ENCODE measurements at regions of chr6 and their contacts with region 1.

Region 1: DNA sequence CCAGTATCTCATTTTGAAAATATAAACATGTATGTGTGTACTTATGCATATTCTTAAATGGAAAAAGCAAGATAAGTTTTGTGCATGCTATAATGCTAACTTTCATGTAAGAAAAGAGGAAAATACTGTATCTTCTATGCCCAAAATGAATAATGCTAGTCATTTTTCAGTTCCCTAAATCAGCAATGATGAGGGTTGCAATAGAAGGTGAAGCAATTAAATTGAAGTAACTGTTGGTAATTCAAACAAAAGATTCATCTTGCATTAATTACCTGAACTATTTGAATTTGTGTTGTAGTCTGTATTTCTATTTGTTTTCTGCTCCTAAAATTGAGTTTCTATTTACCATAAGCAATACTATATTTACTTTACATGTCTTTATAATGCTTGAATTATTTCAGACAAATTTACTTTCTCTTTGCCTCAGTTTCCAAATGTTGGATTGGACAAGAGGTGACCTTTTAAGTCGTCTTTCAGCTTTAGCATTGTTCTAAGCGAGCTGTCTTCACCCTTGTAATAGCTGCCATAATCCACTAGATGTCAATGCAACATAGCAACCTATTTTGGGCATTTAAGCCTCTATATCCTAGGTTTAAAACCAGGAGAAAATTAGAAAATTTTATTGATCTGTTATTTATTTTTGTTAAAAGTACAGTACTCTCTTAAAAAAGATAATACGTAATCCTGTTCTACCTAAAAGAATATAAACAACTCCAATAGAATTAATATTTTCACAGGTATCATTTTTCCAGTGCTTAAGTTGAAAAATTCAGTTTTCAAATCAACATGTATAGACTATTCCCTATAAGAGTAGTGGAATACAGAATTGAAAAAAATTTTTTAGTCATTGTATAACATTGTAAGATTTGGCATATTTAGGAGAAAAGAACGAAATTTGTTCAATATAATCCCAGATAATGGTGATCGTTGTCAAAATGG is 52.3 kb upstream of the IFNGR1 start:
- DNase-seq: no peak
- H3K4me3 Mint-ChIP-seq: no peak overlapping the region
- H3K27ac Mint-ChIP-seq: no peak overlapping the region
- H3K4me1 Mint-ChIP-seq: no peaks in the 10 kb centered on the region
- H3K27me3 Mint-ChIP-seq: no peaks in the 10 kb centered on the region
- CTCF ChIP-seq: peak; percentile 42

Region 2: GRCh38 chr6:137188855-137189254 is 82.7 kb before region 1 on chr6:
- CTCF ChIA-PET with region 1: no interaction called
- intact Hi-C with region 1: no loop called
- DNase-seq: no peak
- H3K4me3 Mint-ChIP-seq: no peak overlapping the region
- H3K27ac Mint-ChIP-seq: no peak overlapping the region
- H3K4me1 Mint-ChIP-seq: no peaks in the 10 kb centered on the region
- H3K27me3 Mint-ChIP-seq: no peaks in the 10 kb centered on the region
- CTCF ChIP-seq: no peak

Region 3: GRCh38 chr6:137313928-137314855 is 42.7 kb after region 1 on chr6:
- CTCF ChIA-PET with region 1: interaction called, 14 read pairs
- intact Hi-C with region 1: loop called (anchors 1 kb)
- DNase-seq: peak; percentile 37
- H3K4me3 Mint-ChIP-seq: no peak overlapping the region
- H3K27ac Mint-ChIP-seq: no peak overlapping the region
- H3K4me1 Mint-ChIP-seq: peaks cover 11% of the 10 kb centered on the region
- H3K27me3 Mint-ChIP-seq: no peaks in the 10 kb centered on the region
- CTCF ChIP-seq: peak; percentile 33

Region 4: GRCh38 chr6:137370871-137371633 is 99.5 kb after region 1 on chr6:
- CTCF ChIA-PET with region 1: no interaction called
- intact Hi-C with region 1: no loop called
- DNase-seq: no peak
- H3K4me3 Mint-ChIP-seq: no peak overlapping the region
- H3K27ac Mint-ChIP-seq: no peak overlapping the region
- H3K4me1 Mint-ChIP-seq: no peaks in the 10 kb centered on the region
- H3K27me3 Mint-ChIP-seq: no peaks in the 10 kb centered on the region
- CTCF ChIP-seq: no peak

Region 5: DNA sequence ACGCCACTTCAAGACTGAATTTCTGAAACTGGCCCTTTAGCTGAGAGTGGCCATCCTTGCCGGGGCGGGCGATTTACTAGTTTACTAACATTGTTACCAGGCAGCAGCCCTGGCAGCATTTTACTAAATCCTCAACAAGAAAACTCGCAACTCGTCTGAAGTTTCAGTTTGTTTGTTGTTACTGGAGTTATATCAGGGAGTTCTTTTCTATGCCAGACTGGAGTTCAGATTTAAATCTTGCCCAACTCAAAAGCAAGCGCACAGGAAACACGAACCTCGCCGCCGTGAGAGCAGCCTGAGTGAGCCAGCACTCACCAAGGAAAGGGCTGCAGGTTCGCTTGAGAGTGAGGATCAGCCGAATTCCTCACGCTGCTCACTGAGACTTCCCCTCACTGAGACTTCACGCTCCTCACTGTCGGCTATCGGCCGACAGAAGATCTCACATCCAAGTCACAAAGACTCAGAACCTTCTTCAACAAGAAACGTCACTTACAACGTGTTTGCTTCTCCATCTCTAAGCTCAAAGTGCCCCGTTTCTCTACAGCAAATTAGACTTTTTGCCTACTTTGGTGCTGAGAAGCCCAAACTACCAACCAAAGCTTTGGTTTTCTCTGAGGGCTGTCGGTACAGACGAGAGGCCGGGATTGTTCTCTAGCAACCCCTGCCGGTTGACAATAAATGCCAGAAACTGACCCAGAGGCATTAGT is 143.8 kb after region 1 on chr6:
- CTCF ChIA-PET with region 1: no interaction called
- intact Hi-C with region 1: loop called (anchors 10 kb)
- DNase-seq: peak; percentile 61
- H3K4me3 Mint-ChIP-seq: peak overlapping the region; percentile 71
- H3K27ac Mint-ChIP-seq: peak overlapping the region; percentile 59
- H3K4me1 Mint-ChIP-seq: no peaks in the 10 kb centered on the region
- H3K27me3 Mint-ChIP-seq: peaks cover 50% of the 10 kb centered on the region
- CTCF ChIP-seq: peak; percentile 50

Region 6: DNA sequence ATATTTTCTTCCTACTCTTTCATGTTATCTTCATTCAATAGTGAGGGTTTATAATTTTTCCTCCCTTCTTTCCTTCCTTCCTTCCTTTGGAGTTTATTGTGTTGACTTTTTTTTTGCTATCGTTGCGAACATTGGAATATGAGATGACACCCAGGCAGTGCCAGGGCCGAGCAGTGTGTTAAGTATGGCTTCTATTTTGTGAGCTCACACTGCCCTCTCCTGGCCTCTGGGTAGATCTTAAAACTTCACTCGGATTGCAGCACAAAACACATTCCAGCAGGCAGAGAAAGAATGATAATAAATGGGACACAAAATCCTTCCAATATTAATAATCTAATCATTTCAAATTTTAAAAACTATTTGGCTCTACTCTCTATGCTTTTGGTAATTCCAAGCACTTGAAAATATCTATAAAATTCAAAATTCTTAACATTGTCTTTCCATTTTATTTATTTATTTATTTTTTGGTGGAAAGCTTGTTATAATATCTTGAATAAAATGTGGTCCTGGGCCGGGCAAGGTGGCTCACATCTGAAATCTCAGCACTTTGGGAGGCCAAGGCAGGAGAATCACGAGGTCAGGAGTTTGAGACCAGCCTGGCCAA is 370.1 kb after region 1 on chr6:
- CTCF ChIA-PET with region 1: interaction called, 4 read pairs
- intact Hi-C with region 1: loop called (anchors 1 kb)
- DNase-seq: peak; percentile 53
- H3K4me3 Mint-ChIP-seq: no peak overlapping the region
- H3K27ac Mint-ChIP-seq: no peak overlapping the region
- H3K4me1 Mint-ChIP-seq: peaks cover 5% of the 10 kb centered on the region
- H3K27me3 Mint-ChIP-seq: no peaks in the 10 kb centered on the region
- CTCF ChIP-seq: no peak

Measured in Calu3 (cell line).